ENCODE measurements at regions of chr15 and their contacts with region 1.

Region 1: GRCh38 chr15:80970018-80970658 is 19.5 kb downstream of the MESD start:
- DNase-seq: no peak
- H3K4me3 ChIP-seq: no peak overlapping the region
- H3K27ac ChIP-seq: no peak overlapping the region
- H3K4me1 ChIP-seq: peaks cover 4 to 19% (median 15%) of the 10 kb centered on the region in 4 donors
- H3K27me3 ChIP-seq: no peaks in the 10 kb centered on the region
- CTCF ChIP-seq: peak; percentile 76 to 88 (median 86)
- EP300 ChIP-seq: no peak
- POLR2A ChIP-seq: no peak

Region 2: GRCh38 chr15:80567721-80568157 is 402.4 kb before region 1 on chr15:
- intact Hi-C with region 1: loop called (anchors 5 kb)
- DNase-seq: no peak
- H3K4me3 ChIP-seq: no peak overlapping the region
- H3K27ac ChIP-seq: no peak overlapping the region
- H3K4me1 ChIP-seq: peaks cover 0 to 12% (median 8%) of the 10 kb centered on the region in 4 donors
- H3K27me3 ChIP-seq: no peaks in the 10 kb centered on the region
- CTCF ChIP-seq: peak; percentile 62 to 73 (median 62)
- EP300 ChIP-seq: no peak
- POLR2A ChIP-seq: no peak

Region 3: DNA sequence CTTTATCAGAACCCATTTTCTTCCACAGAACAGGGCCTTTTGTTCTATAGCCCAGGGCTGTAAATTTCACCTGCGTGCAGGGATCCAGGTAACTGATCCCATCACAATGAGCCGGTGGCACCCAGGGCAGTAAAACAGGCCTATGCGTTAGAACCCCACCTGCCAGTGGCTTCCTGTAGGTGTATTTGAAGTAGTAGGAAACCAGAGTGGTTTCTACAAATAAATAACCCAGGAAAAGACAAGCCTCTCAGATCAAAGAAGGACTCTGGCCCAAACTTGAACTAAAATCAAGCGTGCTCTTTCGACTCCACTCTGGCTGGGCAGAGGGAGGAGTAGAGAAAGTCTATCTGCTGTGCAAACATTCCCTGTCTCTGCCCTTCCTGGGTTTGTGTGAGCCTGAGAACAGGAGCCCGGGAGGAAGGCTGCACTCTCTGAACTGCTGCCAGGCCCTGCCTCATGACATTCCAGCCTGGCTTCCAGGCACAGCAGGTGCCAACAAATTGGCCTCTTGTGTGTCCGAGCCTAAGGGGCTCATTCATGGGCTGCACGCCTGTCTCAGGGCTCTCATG is 113.2 kb before region 1 on chr15:
- intact Hi-C with region 1: no loop called
- DNase-seq: no peak
- H3K4me3 ChIP-seq: no peak overlapping the region
- H3K27ac ChIP-seq: no peak overlapping the region
- H3K4me1 ChIP-seq: peaks cover 10 to 34% (median 27%) of the 10 kb centered on the region in 4 donors
- H3K27me3 ChIP-seq: no peaks in the 10 kb centered on the region
- CTCF ChIP-seq: no peak
- EP300 ChIP-seq: no peak
- POLR2A ChIP-seq: no peak

Region 4: DNA sequence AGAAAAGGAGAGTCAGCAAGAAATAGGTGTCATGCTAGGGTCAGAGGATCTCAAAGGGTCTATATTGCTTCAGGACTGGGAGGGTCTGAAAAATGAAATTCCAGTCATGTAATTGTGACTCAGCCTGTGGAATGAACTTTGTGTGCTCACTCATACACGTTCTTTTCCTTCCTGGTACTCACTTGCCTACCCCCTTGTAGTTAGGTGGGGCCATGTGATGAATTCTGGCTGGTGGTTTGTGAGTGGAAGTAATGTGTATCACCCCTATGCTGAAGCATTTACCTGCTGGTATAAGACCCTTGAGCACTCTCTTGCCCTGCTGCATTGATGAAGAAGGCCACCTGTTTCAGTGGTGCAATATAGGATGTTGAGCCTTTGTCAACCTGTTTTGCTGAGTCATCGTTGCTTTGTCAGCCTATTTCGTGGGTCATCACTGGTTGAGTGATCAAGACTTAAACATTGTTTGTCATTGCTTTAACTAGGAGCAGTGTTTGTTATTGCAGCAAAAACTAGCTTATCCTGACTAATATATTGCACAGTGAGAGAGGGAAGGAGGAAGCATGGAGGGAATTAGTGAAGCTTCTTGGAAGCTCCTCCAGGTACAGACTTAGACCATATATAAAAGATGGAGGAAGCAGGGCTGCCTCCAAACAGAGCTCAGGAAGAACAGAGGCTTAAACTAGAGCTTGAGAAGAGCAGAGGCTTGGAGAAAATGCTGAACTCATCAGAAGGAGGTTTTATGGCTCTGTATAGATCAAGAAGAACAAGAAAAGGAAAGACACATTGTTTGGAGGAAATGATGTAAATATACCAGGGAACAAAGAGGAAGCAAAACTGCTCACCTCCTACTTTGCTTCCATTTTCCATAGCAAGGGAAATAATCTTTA is 59.5 kb after region 1 on chr15:
- intact Hi-C with region 1: loop called (anchors 10 kb)
- DNase-seq: no peak
- H3K4me3 ChIP-seq: no peak overlapping the region
- H3K27ac ChIP-seq: peak overlapping the region in 1 of 4 donors; percentile 46
- H3K4me1 ChIP-seq: peaks cover 13 to 30% (median 17%) of the 10 kb centered on the region in 4 donors
- H3K27me3 ChIP-seq: no peaks in the 10 kb centered on the region
- CTCF ChIP-seq: no peak
- EP300 ChIP-seq: no peak
- POLR2A ChIP-seq: no peak

Region 5: DNA sequence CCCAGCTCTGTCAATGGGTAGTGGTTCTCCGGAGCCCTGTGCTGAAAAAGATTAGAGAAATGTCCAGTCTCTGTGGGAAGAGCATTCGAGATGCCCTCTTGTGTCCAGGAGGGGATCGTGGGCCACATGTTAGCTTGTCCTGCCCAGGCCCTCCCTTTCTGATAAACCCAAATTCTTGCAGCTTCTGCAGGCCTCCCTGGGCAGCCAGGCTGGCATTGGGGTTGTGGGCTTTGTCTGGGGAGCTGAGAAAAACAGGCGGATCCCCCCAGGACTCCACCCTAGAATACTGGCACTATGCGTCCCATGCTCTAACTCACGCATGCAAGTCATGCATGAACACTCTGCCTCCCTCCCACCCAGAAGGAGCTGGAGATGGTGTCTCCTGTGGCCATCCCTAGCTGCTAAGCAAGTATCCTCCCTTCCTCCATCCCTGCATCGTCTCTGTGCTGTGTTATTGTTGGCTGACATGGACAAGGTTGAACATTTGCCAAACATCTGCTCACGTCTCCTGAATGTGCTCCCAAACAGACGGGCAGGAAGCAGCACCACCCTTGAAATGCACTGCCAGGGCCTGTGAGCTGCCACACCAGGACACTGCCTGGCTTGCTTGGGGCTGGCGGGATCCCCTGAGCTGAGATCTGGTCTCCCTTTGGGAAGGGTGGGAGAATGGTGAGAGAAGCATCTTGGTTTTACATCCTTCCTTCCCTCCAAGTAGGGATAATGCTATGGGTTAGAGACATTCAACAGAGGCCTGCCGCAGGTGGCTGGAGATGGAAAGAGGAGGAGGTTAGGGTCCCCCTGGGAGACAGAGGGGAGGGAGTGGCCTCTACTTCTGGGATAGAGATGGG is 190.4 kb after region 1 on chr15:
- intact Hi-C with region 1: no loop called
- DNase-seq: no peak
- H3K4me3 ChIP-seq: no peak overlapping the region
- H3K27ac ChIP-seq: peak overlapping the region; percentile 39 to 53 (median 46)
- H3K4me1 ChIP-seq: peaks cover 20 to 36% (median 26%) of the 10 kb centered on the region in 4 donors
- H3K27me3 ChIP-seq: no peaks in the 10 kb centered on the region
- CTCF ChIP-seq: no peak
- EP300 ChIP-seq: no peak
- POLR2A ChIP-seq: no peak